ENCODE measurements at regions of chr6 and their contacts with region 1.

Region 1: DNA sequence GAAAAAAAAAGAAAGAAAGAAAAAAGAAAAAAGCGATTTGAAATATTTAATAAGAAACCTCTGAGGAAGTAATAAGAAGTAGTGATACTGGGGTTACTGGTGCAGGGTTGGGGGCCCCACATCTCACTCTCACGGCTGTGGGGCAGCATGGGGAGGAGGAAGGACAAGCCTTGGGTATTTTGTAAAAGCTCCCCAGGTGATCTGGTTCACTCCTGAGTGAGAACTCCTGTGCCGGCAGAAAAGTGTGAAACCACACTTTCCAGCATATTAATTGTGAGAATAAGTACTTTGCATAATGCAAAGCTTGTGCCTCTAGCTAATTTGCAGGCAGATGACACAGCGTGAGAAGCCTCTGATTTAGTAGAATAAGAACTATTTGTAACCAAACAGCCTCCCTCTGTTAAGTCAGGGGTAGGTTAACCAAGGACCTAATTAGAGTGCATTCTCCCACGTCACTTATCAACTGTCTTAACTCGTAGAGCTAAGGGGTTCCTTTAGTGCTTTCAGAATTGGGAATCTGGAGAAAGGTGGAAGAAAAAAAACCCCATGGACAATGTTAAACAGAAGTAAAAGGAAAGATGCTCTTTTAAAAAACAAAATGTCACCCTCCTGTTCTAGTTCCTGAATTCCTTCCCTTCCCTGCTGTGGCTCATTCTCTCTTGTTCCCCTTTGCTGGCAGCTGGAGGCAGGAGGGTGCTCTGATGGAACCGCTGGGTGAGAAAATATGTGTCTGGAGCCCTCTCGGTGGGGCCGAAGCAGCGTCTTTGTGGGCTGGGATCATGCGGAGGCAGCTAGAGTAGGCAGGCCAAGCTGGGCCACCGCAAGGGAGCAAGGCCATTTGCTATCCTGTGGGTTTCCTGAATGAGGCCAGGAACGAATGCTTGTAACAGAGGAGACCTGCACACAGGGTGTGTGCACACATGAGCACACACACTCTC is 108.7 kb downstream of the FYN start:
- DNase-seq: peak; percentile 61
- ATAC-seq: peak; percentile 66
- H3K4me3 ChIP-seq: peak overlapping the region in 1 of 5 experiments; percentile 33
- H3K4me3 Mint-ChIP-seq: peak overlapping the region; percentile 71
- H3K27ac ChIP-seq: peak overlapping the region in 1 of 2 donors; percentile 54
- H3K27ac Mint-ChIP-seq: peak overlapping the region; percentile 77
- H3K4me1 ChIP-seq: peaks cover 63 to 66% of the 10 kb centered on the region in 2 donors
- H3K4me1 Mint-ChIP-seq: peaks cover 84% of the 10 kb centered on the region
- H3K27me3 ChIP-seq: no peaks in the 10 kb centered on the region
- H3K27me3 Mint-ChIP-seq: no peaks in the 10 kb centered on the region
- CTCF ChIP-seq: no peak

Region 2: GRCh38 chr6:111668410-111668809 is 96.1 kb before region 1 on chr6:
- CTCF ChIA-PET with region 1: no interaction called
- POLR2A ChIA-PET with region 1: no interaction called
- intact Hi-C with region 1: no loop called
- DNase-seq: no peak
- ATAC-seq: no peak
- H3K4me3 ChIP-seq: no peak overlapping the region
- H3K4me3 Mint-ChIP-seq: no peak overlapping the region
- H3K27ac ChIP-seq: no peak overlapping the region
- H3K27ac Mint-ChIP-seq: no peak overlapping the region
- H3K4me1 ChIP-seq: no peaks in the 10 kb centered on the region
- H3K4me1 Mint-ChIP-seq: no peaks in the 10 kb centered on the region
- H3K27me3 ChIP-seq: no peaks in the 10 kb centered on the region
- H3K27me3 Mint-ChIP-seq: no peaks in the 10 kb centered on the region
- CTCF ChIP-seq: no peak

Region 3: DNA sequence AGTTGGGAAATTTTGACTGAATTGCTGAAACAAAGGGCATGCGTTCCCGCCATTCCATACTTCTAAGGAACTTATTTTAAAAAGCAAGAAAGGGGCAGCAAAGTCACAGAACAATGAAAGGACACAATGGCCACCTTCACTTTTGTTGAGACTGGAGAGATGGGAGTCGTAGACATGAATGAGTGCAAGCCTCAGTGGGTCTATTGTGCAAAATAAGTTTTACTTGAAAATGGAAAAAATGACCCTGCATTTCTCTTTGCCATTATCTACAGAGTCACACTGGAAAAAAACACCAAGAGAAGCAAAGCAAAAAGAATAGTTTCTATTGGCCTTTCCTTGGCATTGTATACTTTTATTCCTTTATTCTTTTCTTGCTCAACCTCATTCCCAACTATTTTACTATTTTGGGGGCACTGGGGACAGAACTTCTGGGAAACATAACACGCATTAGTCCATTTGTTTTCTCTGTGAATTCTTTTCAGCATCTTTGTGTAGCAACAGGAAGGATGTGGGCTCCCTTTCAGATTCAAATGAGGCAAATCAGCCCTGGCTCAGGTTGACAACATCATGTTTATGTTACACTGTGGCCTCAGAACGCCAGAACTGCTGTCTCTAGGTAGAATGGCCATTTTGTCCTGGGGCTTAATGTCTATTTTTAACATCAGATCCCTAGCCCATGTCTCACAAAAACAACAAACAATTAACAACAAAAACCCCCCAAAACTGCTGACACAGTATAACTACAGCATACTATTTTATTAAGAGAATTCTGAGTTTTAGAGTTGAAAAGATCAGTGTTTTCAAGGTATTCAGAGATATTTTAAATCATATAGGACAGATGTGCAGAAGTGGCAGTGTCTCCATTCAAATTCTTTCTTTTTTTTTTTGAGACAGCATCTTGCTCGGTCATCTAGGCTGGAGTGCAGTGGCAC is 13.5 kb before region 1 on chr6:
- CTCF ChIA-PET with region 1: interaction called, 18 read pairs
- POLR2A ChIA-PET with region 1: no interaction called
- intact Hi-C with region 1: loop called (anchors 2 kb)
- DNase-seq: peak; percentile 54
- ATAC-seq: peak; percentile 62
- H3K4me3 ChIP-seq: peak overlapping the region in 1 of 5 experiments; percentile 40
- H3K4me3 Mint-ChIP-seq: peak overlapping the region; percentile 69
- H3K27ac ChIP-seq: peak overlapping the region; percentile 35 to 68
- H3K27ac Mint-ChIP-seq: peak overlapping the region; percentile 94
- H3K4me1 ChIP-seq: peaks cover 68 to 75% of the 10 kb centered on the region in 2 donors
- H3K4me1 Mint-ChIP-seq: peaks cover 76% of the 10 kb centered on the region
- H3K27me3 ChIP-seq: no peaks in the 10 kb centered on the region
- H3K27me3 Mint-ChIP-seq: no peaks in the 10 kb centered on the region
- CTCF ChIP-seq: no peak

Region 4: GRCh38 chr6:111841822-111842221 is 77.3 kb after region 1 on chr6:
- CTCF ChIA-PET with region 1: no interaction called
- POLR2A ChIA-PET with region 1: no interaction called
- intact Hi-C with region 1: loop called (anchors 5 kb)
- DNase-seq: peak; percentile 53
- ATAC-seq: no peak
- H3K4me3 ChIP-seq: no peak overlapping the region
- H3K4me3 Mint-ChIP-seq: no peak overlapping the region
- H3K27ac ChIP-seq: peak overlapping the region; percentile 66 to 76
- H3K27ac Mint-ChIP-seq: no peak overlapping the region
- H3K4me1 ChIP-seq: peaks cover 67 to 78% of the 10 kb centered on the region in 2 donors
- H3K4me1 Mint-ChIP-seq: peaks cover 50% of the 10 kb centered on the region
- H3K27me3 ChIP-seq: no peaks in the 10 kb centered on the region
- H3K27me3 Mint-ChIP-seq: no peaks in the 10 kb centered on the region
- CTCF ChIP-seq: no peak

Region 5: DNA sequence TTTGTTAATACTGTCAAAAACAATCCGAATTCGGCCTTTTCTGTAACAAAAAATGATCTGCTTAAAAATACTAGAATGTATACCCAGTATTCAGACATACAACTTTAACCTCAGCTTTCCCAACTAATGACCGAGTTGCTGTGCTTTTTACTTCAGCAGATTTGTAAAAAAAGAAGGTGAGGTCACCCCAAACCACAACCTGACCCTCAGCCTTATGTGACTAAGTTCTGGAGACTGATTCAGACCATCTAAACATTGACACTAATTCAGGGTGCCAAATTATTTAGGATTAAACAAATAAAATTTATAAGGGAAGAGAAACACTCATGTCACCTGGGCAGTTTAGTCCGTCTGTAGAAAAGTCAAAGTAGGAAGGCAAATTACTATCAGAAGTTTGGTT is 297.1 kb after region 1 on chr6:
- CTCF ChIA-PET with region 1: no interaction called
- POLR2A ChIA-PET with region 1: no interaction called
- intact Hi-C with region 1: no loop called
- DNase-seq: no peak
- ATAC-seq: no peak
- H3K4me3 ChIP-seq: no peak overlapping the region
- H3K4me3 Mint-ChIP-seq: no peak overlapping the region
- H3K27ac ChIP-seq: no peak overlapping the region
- H3K27ac Mint-ChIP-seq: no peak overlapping the region
- H3K4me1 ChIP-seq: no peaks in the 10 kb centered on the region
- H3K4me1 Mint-ChIP-seq: no peaks in the 10 kb centered on the region
- H3K27me3 ChIP-seq: peaks cover 0 to 11% (median 0%) of the 10 kb centered on the region in 4 experiments
- H3K27me3 Mint-ChIP-seq: no peaks in the 10 kb centered on the region
- CTCF ChIP-seq: no peak